PC-3 (cell line): ENCODE measurements at regions of chr6 and their contacts with region 1.

Region 1: DNA sequence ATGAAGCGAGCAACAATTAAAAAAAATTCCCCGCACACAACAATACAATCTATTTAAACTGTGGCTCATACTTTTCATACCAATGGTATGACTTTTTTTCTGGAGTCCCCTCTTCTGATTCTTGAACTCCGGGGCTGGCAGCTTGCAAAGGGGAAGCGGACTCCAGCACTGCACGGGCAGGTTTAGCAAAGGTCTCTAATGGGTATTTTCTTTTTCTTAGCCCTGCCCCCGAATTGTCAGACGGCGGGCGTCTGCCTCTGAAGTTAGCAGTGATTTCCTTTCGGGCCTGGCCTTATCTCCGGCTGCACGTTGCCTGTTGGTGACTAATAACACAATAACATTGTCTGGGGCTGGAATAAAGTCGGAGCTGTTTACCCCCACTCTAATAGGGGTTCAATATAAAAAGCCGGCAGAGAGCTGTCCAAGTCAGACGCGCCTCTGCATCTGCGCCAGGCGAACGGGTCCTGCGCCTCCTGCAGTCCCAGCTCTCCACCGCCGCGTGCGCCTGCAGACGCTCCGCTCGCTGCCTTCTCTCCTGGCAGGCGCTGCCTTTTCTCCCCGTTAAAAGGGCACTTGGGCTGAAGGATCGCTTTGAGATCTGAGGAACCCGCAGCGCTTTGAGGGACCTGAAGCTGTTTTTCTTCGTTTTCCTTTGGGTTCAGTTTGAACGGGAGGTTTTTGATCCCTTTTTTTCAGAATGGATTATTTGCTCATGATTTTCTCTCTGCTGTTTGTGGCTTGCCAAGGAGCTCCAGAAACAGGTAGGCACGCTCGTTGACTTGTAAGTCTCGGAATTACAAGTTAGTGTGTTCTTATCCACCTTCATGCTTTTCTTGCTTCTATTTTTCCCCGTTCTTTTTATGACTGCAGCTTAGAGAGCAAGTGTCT is at the start of gene EDN1:
- DNase-seq: peak; percentile 85
- ATAC-seq: peak; percentile 61
- H3K4me3 ChIP-seq: peak within 1 kb of the TSS; percentile 77
- H3K27ac ChIP-seq: peak within 1 kb of the TSS; percentile 86
- H3K4me1 ChIP-seq: peaks cover 70% of the 10 kb centered on the region
- H3K27me3 ChIP-seq: no peaks in the 10 kb centered on the region
- CTCF ChIP-seq: peak; percentile 45; the same call in 1 of the 2 replicates
- total RNA-seq, gene EDN1: 21.9 and 25.6 TPM in 2 replicates

Region 2: GRCh38 chr6:10633216-10633615 is 1657.0 kb before region 1 on chr6:
- CTCF ChIA-PET with region 1: no interaction called
- POLR2A ChIA-PET with region 1: no interaction called
- intact Hi-C with region 1: no loop called
- DNase-seq: peak; percentile 95
- ATAC-seq: peak; percentile 100
- H3K4me3 ChIP-seq: no peak overlapping the region
- H3K27ac ChIP-seq: peak overlapping the region; percentile 69
- H3K4me1 ChIP-seq: peaks cover 17% of the 10 kb centered on the region
- H3K27me3 ChIP-seq: no peaks in the 10 kb centered on the region
- CTCF ChIP-seq: no peak

Region 3: GRCh38 chr6:11653028-11653583 is 637.1 kb before region 1 on chr6:
- CTCF ChIA-PET with region 1: no interaction called
- POLR2A ChIA-PET with region 1: no interaction called
- intact Hi-C with region 1: loop called (anchors 5 kb)
- DNase-seq: peak; percentile 74
- ATAC-seq: peak; percentile 64
- H3K4me3 ChIP-seq: no peak overlapping the region
- H3K27ac ChIP-seq: no peak overlapping the region
- H3K4me1 ChIP-seq: peaks cover 37% of the 10 kb centered on the region
- H3K27me3 ChIP-seq: no peaks in the 10 kb centered on the region
- CTCF ChIP-seq: no peak

Region 4: DNA sequence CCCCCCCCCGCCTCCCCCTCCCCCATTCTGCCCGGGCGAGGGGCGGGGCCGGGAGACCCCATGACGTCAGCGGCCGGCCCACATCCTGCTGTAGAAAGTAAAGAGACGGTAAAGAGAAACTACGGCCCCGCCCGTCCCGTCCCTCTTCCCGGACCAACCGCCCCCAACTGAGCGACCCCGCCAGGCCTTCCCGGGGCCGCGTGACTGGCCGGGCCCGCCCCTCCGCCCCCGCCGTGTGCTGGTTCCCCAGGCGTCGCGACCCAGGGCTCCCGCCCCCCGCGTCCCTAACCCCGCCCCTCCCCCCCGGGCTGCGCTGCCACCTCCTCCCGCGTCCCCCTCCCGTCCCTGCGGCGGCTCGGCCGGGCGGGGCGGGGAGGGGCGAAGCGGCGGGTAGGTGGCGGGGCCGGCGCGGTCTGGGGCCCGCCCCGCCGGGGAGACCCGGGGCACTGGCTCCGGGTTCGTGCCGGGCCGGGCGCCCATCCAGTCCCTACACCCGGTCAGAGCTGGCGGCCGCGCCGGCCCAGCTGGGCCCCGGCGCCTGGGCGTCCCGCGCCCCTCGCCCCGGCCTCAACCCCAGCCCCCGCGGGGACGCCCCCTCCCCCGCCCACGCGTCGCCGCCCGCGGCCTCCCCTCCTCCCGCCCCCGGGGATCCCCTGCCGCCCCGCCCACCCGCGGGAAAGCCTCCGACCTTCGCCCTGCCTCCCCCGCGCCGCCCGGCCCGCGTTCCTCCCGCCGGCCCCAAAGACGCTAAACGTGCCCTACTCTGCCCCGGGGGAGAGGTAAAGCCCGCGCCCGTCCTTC is 278.7 kb before region 1 on chr6:
- CTCF ChIA-PET with region 1: no interaction called
- POLR2A ChIA-PET with region 1: interaction called, 18 read pairs
- intact Hi-C with region 1: loop called (anchors 5 kb)
- DNase-seq: peak; percentile 93
- ATAC-seq: peak; percentile 62
- H3K4me3 ChIP-seq: peak overlapping the region; percentile 91
- H3K27ac ChIP-seq: peak overlapping the region; percentile 86
- H3K4me1 ChIP-seq: peaks cover 37% of the 10 kb centered on the region
- H3K27me3 ChIP-seq: no peaks in the 10 kb centered on the region
- CTCF ChIP-seq: no peak

Region 5: DNA sequence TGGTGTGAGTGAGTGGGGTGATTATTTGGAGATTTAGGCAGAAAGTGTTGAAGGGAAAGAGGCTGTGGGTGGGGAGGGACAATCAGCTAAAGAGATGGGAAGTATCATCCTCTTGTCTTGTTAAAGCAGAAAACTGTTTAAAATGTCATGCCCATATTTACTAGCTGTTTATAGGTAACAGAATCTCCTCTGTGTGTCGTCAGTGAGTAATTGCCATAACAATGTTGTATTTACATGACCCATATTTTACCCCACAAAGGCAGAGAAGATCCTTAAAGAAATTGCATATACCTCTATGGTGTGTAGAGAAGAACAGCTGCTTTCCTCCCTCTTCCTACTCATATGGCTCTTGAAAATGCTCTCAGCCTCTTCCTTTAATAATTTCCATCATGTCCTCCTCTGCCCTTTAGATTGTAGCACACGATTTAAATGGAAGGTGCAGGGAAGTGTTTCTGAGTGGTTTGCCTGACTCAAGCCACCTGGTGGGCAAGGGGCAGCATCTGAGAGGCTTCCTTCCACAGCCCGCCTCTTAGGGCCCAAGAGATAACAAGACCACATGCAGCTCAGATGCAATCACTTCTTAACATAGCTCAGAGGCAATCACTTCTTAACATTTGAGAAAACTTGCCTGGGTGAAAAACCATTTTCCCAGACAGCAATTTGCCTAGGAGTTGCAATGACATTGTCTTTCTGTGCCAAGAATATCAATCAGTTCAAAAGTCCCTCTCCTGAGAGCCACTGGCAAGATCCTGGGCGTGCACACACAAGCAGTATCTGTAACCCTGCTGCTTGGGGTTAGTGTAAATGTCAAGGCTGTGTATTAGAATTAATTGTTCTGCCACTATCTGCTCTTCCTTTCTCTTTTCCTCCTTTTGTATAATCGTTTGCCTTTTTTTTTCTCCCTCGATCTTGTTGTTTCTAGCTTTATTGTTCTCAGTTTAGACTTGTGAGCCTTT is 44.1 kb before region 1 on chr6:
- CTCF ChIA-PET with region 1: interaction called, 5 read pairs
- POLR2A ChIA-PET with region 1: interaction called, 11 read pairs
- intact Hi-C with region 1: loop called (anchors 1 kb)
- DNase-seq: peak; percentile 69
- ATAC-seq: peak; percentile 89
- H3K4me3 ChIP-seq: no peak overlapping the region
- H3K27ac ChIP-seq: peak overlapping the region; percentile 50
- H3K4me1 ChIP-seq: peaks cover 36% of the 10 kb centered on the region
- H3K27me3 ChIP-seq: no peaks in the 10 kb centered on the region
- CTCF ChIP-seq: no peak

Region 6: DNA sequence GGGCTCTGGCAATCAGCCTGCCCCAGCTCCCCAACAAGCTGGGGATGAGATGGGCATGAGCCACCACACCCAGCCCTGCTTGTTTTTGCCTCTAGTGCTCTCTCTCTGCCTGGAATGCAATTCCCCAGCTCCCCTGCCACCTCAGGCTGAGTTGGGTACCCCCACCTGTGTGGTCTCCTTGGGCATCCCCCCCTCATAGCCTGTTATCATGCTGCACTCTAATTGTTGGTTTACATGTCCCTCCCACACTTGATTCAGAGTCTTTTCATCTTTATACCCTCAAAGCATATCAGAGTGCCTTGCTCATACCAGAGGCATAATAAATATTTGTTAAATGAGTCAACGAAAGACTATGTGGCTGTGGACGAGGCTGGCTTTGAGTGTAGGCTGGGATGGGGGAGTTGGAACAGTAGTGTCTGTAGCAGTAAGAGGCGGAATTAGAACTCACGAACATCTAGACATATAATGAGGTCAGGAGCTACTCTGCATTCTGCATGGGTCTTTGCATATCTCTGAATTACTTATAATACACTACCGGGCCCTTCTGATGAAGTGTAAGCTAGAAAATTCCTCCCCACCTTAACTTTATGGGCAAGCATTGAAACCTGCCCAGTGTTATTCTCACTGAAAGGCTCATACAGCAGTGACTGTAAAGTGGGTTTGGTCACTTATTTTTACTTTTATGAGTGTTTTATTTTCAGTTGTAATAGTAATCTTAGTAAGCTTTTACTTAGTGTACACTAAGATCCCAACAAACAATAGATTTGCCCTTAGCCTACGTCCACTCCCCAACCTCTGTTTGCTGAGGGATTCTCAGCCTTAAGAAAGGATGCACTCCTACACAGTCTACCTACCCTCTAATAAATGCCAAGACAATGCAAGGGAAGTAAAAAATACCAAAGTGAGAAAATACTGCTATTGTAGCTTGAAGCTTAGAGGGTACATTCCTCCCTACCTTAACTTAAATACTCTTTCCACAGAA is 58.6 kb after region 1 on chr6:
- CTCF ChIA-PET with region 1: interaction called, 3 read pairs
- POLR2A ChIA-PET with region 1: interaction called, 43 read pairs
- intact Hi-C with region 1: loop called (anchors 2 kb)
- DNase-seq: peak; percentile 96
- ATAC-seq: peak; percentile 97
- H3K4me3 ChIP-seq: peak overlapping the region; percentile 10; the same call in 1 of the 2 replicates
- H3K27ac ChIP-seq: peak overlapping the region; percentile 85
- H3K4me1 ChIP-seq: peaks cover 38% of the 10 kb centered on the region
- H3K27me3 ChIP-seq: no peaks in the 10 kb centered on the region
- CTCF ChIP-seq: no peak

Region 7: DNA sequence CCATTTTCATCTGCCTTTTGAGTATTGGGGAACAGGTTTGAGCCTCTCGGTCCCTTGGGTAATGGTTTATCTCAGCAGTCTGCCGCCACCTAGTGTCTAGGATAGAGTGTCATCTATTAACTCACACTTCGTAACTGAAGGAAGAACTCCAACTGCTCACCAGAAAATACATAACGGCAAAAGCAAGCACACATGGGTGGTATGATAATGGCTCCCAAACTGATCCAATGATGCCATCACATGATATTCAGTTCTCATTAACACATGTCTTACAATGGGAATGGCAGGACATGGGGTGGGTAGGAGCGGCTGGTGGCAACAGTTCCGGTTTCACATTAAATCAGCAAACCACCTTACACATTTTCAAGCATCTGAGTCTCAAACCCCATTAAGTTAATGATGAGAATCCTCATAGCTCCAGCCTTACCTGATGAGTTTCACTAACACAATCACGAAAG is 315.7 kb after region 1 on chr6:
- CTCF ChIA-PET with region 1: interaction called, 5 read pairs
- POLR2A ChIA-PET with region 1: interaction called, 7 read pairs
- intact Hi-C with region 1: loop called (anchors 1 kb)
- DNase-seq: peak; percentile 82
- ATAC-seq: peak; percentile 72
- H3K4me3 ChIP-seq: no peak overlapping the region
- H3K27ac ChIP-seq: no peak overlapping the region
- H3K4me1 ChIP-seq: peaks cover 15% of the 10 kb centered on the region
- H3K27me3 ChIP-seq: no peaks in the 10 kb centered on the region
- CTCF ChIP-seq: peak; percentile 91